PC-3 (cell line): ENCODE measurements at regions of chr10 and their contacts with region 1.

Region 1: DNA sequence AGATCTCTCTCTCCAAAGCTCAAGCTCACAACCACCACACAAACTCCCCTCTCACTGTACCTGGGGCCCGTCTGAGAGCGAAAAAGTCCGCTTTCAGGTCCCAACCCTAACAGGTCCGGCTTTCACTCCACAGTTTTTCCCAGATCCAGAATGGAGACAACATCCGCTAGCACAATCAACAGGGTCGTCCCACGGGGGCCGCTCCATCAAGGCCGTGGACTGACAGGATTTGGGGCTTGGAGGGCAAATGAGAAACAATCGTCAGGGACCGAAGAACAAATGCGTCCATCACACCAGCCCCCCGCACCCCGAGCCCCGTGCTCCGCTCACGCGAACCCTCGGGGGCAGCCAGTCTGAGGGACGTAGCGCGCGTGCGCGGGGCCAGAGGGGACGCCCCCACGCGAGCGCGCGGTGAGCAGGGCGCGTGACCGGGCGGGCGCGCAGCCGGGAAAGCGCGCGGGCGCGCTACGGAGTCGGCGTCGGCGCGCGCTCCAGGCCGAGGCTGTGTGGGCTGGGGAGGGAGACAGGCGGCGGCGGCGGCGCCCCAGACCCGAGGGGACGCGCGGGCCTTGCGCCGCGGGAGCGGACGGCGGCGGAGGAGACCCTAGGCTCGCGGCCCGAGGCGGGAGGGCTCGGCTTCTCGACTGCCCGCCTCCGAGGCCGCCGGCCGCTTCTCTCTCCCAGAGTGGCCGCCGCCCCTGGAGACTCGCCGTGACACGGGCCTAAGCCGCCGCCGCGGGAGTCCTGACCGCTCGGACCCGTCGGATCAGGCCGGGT is at the start of gene SLK:
- DNase-seq: peak; percentile 80
- ATAC-seq: peak; percentile 65
- H3K4me3 ChIP-seq: peak within 1 kb of the TSS; percentile 89
- H3K27ac ChIP-seq: peak within 1 kb of the TSS; percentile 48
- H3K4me1 ChIP-seq: peaks cover 20% of the 10 kb centered on the region
- H3K27me3 ChIP-seq: no peaks in the 10 kb centered on the region
- CTCF ChIP-seq: no peak
- total RNA-seq, gene SLK: 17.3 and 20.2 TPM in 2 replicates

Region 2: DNA sequence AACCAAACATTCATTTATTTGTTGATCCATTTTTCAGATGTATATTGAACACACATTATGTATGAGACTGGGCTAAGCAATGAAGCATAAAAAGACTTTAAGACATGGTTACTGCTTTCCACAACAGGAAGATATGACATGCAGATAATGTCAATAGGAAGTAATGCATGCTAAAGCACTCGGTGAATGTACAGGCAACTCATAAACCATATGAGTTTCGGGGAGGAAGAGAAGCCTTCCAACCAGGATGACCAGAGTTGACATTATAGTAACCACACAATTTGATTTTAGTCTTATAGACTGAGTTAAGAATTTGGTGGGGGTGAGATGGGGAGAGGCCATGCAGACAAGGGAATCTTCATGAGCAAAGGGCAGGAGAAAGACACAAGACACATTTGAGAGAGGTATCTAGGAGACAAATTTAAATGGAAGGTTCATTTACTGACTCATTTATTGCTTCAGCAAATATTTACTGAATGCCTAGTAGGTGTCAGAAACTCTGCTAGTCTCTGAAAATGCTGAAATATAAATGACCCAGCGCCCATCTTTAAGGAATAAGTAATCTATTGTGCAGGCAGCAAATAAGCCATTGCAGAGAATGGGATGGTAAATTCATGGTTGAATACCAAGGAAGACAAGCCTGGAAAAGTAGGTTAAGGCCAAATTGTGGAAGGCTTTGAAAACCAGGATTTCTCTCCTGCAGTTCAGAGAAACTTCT is 18.9 kb before region 1 on chr10:
- CTCF ChIA-PET with region 1: no interaction called
- POLR2A ChIA-PET with region 1: no interaction called
- intact Hi-C with region 1: no loop called
- DNase-seq: no peak
- ATAC-seq: peak; percentile 81
- H3K4me3 ChIP-seq: no peak overlapping the region
- H3K27ac ChIP-seq: no peak overlapping the region
- H3K4me1 ChIP-seq: peaks cover 9% of the 10 kb centered on the region
- H3K27me3 ChIP-seq: no peaks in the 10 kb centered on the region
- CTCF ChIP-seq: no peak

Region 3: GRCh38 chr10:104020020-104020419 is 53.2 kb after region 1 on chr10:
- CTCF ChIA-PET with region 1: no interaction called
- POLR2A ChIA-PET with region 1: no interaction called
- intact Hi-C with region 1: loop called (anchors 5 kb)
- DNase-seq: no peak
- ATAC-seq: no peak
- H3K4me3 ChIP-seq: no peak overlapping the region
- H3K27ac ChIP-seq: no peak overlapping the region
- H3K4me1 ChIP-seq: peaks cover 22% of the 10 kb centered on the region
- H3K27me3 ChIP-seq: no peaks in the 10 kb centered on the region
- CTCF ChIP-seq: no peak